Naive thymus-derived CD8-positive, alpha-beta T cell (primary cell): ENCODE measurements at regions of chr7 and their contacts with region 1.

Region 1: DNA sequence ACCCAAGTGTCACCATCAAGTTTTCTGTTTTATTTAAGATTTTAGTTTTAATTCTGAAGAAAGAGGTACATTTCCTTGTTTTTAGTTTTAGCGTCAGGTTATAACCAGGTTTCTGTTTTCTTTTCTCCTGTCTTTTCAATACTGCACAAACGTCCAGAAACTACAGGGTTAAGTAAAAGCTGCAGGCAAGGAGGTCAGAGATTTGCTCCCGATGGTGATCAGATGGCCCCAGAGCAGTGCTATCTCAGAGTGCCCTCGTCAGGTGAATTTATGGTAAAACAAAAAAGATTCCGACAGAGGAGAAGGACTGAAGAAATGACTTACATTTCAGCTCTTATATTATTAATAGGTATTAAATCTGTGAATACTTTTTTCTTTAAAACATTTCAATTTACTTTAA is 128.2 kb downstream of the STRA8 start:
- DNase-seq: no peak
- ATAC-seq: no peak
- H3K4me3 Mint-ChIP-seq: no peak overlapping the region
- H3K27ac Mint-ChIP-seq: no peak overlapping the region
- H3K4me1 Mint-ChIP-seq: peaks cover 0 to 3% (median 0%) of the 10 kb centered on the region in 4 donors
- H3K27me3 Mint-ChIP-seq: no peaks in the 10 kb centered on the region

Region 2: DNA sequence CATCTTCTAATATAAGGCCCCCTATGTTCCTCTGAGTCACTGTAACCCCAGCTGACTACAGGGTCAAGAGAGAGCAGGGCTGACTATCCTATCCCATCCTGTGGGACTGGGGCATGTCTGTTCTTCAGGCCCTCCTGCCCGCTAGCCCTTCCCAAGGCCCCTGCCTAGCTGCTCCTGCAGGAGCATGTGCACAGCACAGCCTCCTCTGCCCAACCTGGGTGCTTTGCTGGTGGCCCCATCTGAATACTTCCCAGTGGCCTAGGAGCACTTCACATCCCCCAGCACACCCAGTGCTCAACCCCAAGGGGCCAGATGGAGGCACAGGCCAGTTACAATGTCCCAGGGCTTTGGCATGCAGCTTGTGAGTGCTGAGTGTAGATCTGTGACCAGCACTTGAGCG is 338.2 kb before region 1 on chr7:
- POLR2A ChIA-PET with region 1: no interaction called
- DNase-seq: no peak
- ATAC-seq: no peak
- H3K4me3 Mint-ChIP-seq: no peak overlapping the region
- H3K27ac Mint-ChIP-seq: no peak overlapping the region
- H3K4me1 Mint-ChIP-seq: peaks cover 0 to 2% (median under 1%) of the 10 kb centered on the region in 4 donors
- H3K27me3 Mint-ChIP-seq: no peaks in the 10 kb centered on the region

Region 3: DNA sequence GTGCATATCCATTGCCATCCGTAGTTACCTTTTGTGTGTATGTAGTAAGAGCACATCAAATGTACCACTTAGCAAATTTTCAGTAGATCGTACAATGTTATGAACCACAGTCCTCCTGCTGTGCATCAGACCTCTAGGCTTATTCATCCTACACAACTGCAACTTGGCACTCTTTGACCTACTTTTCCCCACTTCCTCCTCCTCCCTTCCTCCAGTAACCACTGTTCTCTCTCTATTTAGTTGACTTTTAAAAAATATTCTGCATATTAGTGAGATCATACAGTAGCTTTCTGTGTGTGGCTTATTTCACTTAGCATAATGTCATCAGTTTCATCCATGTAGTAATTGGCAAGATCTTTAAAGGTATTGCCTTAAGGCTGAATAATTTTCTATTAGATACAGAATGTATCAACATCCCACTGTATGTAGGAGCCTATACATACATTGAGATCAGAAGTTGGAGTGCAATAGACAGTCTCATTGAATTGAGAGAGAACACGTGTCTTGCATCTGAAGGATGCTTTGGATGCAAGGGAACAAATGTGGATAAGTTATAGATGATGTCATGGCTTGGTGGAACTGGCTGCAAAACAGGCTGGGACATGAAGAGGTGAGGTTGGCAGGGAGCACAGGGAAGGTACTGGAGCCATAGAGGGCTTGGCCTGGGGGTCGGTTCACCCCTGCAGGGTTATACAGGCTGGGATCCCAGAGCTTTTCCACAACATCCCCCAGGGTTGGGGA is 469.8 kb after region 1 on chr7:
- POLR2A ChIA-PET with region 1: interaction called, 10 read pairs
- DNase-seq: peak in 1 of 10 donors; percentile 5
- ATAC-seq: no peak
- H3K4me3 Mint-ChIP-seq: peak overlapping the region in 1 of 10 donors; percentile 31
- H3K27ac Mint-ChIP-seq: peak overlapping the region in 4 of 10 donors; percentile 1 to 55 (median 35)
- H3K4me1 Mint-ChIP-seq: peaks cover 8 to 24% (median 12%) of the 10 kb centered on the region in 4 donors
- H3K27me3 Mint-ChIP-seq: peaks cover 0 to 16% (median 1%) of the 10 kb centered on the region in 5 donors